ENCODE measurements at regions of chr6 and their contacts with region 1.

Region 1: GRCh38 chr6:41002216-41002615 is 36.8 kb downstream of the UNC5CL start:
- DNase-seq: no peak
- H3K4me3 ChIP-seq: no peak overlapping the region
- H3K27ac ChIP-seq: no peak overlapping the region
- H3K4me1 ChIP-seq: no peaks in the 10 kb centered on the region
- CTCF ChIP-seq: no peak

Region 2: GRCh38 chr6:41027799-41028628 is 25.8 kb after region 1 on chr6:
- CTCF ChIA-PET with region 1: interaction called, 6 read pairs
- POLR2A ChIA-PET with region 1: no interaction called
- intact Hi-C with region 1: loop called (anchors 1 kb)
- DNase-seq: peak; percentile 73
- H3K4me3 ChIP-seq: peak overlapping the region; percentile 59
- H3K27ac ChIP-seq: no peak overlapping the region
- H3K4me1 ChIP-seq: peaks cover 22% of the 10 kb centered on the region
- CTCF ChIP-seq: peak; percentile 99

Region 3: GRCh38 chr6:41066867-41067304 is 64.7 kb after region 1 on chr6:
- CTCF ChIA-PET with region 1: no interaction called
- POLR2A ChIA-PET with region 1: no interaction called
- intact Hi-C with region 1: loop called (anchors 2 kb)
- DNase-seq: peak; percentile 74
- H3K4me3 ChIP-seq: no peak overlapping the region
- H3K27ac ChIP-seq: no peak overlapping the region
- H3K4me1 ChIP-seq: peaks cover 11% of the 10 kb centered on the region
- CTCF ChIP-seq: peak; percentile 98

Region 4: GRCh38 chr6:41132254-41132653 is 130.0 kb after region 1 on chr6:
- CTCF ChIA-PET with region 1: no interaction called
- POLR2A ChIA-PET with region 1: no interaction called
- intact Hi-C with region 1: no loop called
- DNase-seq: no peak
- H3K4me3 ChIP-seq: no peak overlapping the region
- H3K27ac ChIP-seq: no peak overlapping the region
- H3K4me1 ChIP-seq: no peaks in the 10 kb centered on the region
- CTCF ChIP-seq: no peak